ENCODE measurements at regions of chr11 and their contacts with region 1.

Region 1: GRCh38 chr11:3341298-3341697 is 37.6 kb downstream of the ZNF195 start:
- DNase-seq: peak in 4 of 5 donors; percentile 46 to 71 (median 64)
- H3K4me3 ChIP-seq: no peak overlapping the region
- H3K27ac ChIP-seq: no peak overlapping the region
- H3K4me1 ChIP-seq: peaks cover 0 to 6% (median 4%) of the 10 kb centered on the region in 3 donors
- H3K27me3 ChIP-seq: no peaks in the 10 kb centered on the region
- CTCF ChIP-seq: peak; percentile 81

Region 2: DNA sequence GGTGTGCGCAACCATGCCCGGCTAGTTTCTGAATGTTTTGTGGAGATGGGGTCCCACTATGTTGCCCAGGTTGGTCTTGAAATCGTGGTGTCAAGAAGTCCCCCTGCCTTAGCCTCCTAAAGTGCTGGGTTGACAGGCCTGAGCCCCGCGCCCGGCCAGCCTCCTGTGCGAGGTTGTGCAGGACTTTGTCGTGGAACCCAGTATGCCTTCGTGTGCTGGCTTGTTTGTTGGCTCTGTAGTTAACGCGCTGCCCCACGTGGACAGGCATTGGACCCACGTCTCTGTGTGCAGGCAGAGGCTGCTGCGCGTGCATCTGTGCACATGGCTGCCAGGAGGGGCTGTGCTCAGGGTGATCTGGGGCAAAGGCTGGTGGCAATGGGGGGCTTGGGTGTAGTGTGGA is 71.5 kb after region 1 on chr11:
- intact Hi-C with region 1: loop called (anchors 10 kb)
- DNase-seq: no peak
- H3K4me3 ChIP-seq: no peak overlapping the region
- H3K27ac ChIP-seq: no peak overlapping the region
- H3K4me1 ChIP-seq: no peaks in the 10 kb centered on the region
- H3K27me3 ChIP-seq: no peaks in the 10 kb centered on the region
- CTCF ChIP-seq: no peak

Measured in kidney (tissue), 22 donors.